Activated CD4-positive, alpha-beta T cell treated with anti-CD3 and anti-CD28 coated beads for 36 hours (primary cell): ENCODE measurements at regions of chr6 and their contacts with region 1.

Region 1: GRCh38 chr6:32127717-32128592 is at the start of gene ATF6B:
- DNase-seq: peak; percentile 99
- ATAC-seq: peak; percentile 91
- H3K4me3 Mint-ChIP-seq: peak within 1 kb of the TSS; percentile 99
- H3K27ac Mint-ChIP-seq: peak within 1 kb of the TSS; percentile 98
- H3K4me1 Mint-ChIP-seq: peaks cover 39% of the 10 kb centered on the region
- H3K27me3 Mint-ChIP-seq: no peaks in the 10 kb centered on the region
- total RNA-seq, gene ATF6B: 60.2 to 63.4 TPM

Region 2: GRCh38 chr6:31216208-31216898 is 911.6 kb before region 1 on chr6:
- CTCF ChIA-PET with region 1: no interaction called
- POLR2A ChIA-PET with region 1: no interaction called
- intact Hi-C with region 1: no loop called
- DNase-seq: no peak
- ATAC-seq: no peak
- H3K4me3 Mint-ChIP-seq: no peak overlapping the region
- H3K27ac Mint-ChIP-seq: no peak overlapping the region
- H3K4me1 Mint-ChIP-seq: peaks cover 3% of the 10 kb centered on the region
- H3K27me3 Mint-ChIP-seq: no peaks in the 10 kb centered on the region

Region 3: GRCh38 chr6:31958741-31959739 is 168.9 kb before region 1 on chr6 and contains the starts of genes NELFE and SKIC2:
- CTCF ChIA-PET with region 1: no interaction called
- POLR2A ChIA-PET with region 1: no interaction called
- intact Hi-C with region 1: loop called in 1 of 2 experiments (anchors 1 kb)
- DNase-seq: peak; percentile 99
- ATAC-seq: peak; percentile 99
- H3K4me3 Mint-ChIP-seq: peak within 1 kb of the TSS; percentile 95
- H3K27ac Mint-ChIP-seq: peak within 1 kb of the TSS; percentile 98
- H3K4me1 Mint-ChIP-seq: peaks cover 34% of the 10 kb centered on the region
- H3K27me3 Mint-ChIP-seq: no peaks in the 10 kb centered on the region
- total RNA-seq, gene NELFE: 74.3 to 95.1 TPM
- total RNA-seq, gene SKIC2: 90.2 to 104 TPM

Region 4: GRCh38 chr6:32076321-32076809 is 51.6 kb before region 1 on chr6:
- CTCF ChIA-PET with region 1: no interaction called
- POLR2A ChIA-PET with region 1: no interaction called
- intact Hi-C with region 1: no loop called
- DNase-seq: no peak
- ATAC-seq: no peak
- H3K4me3 Mint-ChIP-seq: no peak overlapping the region
- H3K27ac Mint-ChIP-seq: no peak overlapping the region
- H3K4me1 Mint-ChIP-seq: no peaks in the 10 kb centered on the region
- H3K27me3 Mint-ChIP-seq: no peaks in the 10 kb centered on the region

Region 5: DNA sequence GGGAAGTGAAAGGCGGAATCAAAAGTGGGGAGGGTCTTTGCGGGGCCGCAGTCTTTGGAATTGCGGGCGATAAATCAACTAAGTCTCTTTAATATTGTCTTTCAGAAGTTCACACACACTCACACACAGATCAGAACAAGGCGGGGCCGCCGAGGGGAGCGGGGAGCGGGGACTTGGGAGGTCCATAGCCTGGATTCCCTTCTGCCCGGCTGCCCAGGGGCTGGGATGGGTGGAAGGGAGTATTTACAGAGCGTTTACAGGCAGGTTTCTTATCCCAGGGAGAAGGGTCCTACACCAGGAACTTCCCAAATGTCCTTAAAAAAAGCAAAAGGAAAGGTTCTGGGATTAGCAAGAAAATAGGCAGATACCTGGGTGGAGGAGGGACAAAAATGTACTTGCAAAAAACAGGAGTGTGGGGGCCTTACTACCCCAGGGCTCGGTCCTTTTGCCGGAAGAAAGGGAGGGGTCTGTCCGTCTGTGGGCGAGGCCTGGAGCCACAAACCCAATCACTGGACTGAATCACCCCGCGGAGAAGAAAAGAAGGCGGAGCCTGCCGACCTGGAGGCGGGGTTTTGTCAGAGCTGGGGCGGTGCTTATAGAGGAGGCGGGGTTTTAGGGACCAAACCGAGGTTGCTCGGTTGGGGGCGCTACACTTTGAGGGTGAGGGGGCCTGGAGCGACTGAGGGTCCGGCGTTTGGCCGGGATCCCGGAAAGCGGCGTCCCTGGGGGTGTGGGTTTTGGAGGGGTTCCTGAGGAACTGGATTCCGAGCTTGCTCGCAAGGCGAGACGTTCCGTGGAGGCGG is 20.5 kb after region 1 on chr6:
- CTCF ChIA-PET with region 1: interaction called, 6 read pairs
- POLR2A ChIA-PET with region 1: interaction called, 3 read pairs
- intact Hi-C with region 1: loop called in 1 of 2 experiments (anchors 1 kb)
- DNase-seq: peak; percentile 88
- ATAC-seq: peak; percentile 88
- H3K4me3 Mint-ChIP-seq: peak overlapping the region; percentile 67
- H3K27ac Mint-ChIP-seq: peak overlapping the region; percentile 0
- H3K4me1 Mint-ChIP-seq: peaks cover 42% of the 10 kb centered on the region
- H3K27me3 Mint-ChIP-seq: peaks cover 19% of the 10 kb centered on the region

Region 6: GRCh38 chr6:32190054-32190851 is 62.3 kb after region 1 on chr6 and contains the start of gene PBX2:
- CTCF ChIA-PET with region 1: interaction called, 7 read pairs
- POLR2A ChIA-PET with region 1: interaction called, 4 read pairs
- intact Hi-C with region 1: loop called (anchors 1 kb)
- DNase-seq: peak; percentile 92
- ATAC-seq: peak; percentile 58
- H3K4me3 Mint-ChIP-seq: peak within 1 kb of the TSS; percentile 95
- H3K27ac Mint-ChIP-seq: peak within 1 kb of the TSS; percentile 96
- H3K4me1 Mint-ChIP-seq: peaks cover 66% of the 10 kb centered on the region
- H3K27me3 Mint-ChIP-seq: no peaks in the 10 kb centered on the region
- total RNA-seq, gene PBX2: 64.9 to 77.9 TPM

Region 7: GRCh38 chr6:32843979-32844838 is 716.3 kb after region 1 on chr6 and contains the start of gene PSMB8:
- CTCF ChIA-PET with region 1: no interaction called
- POLR2A ChIA-PET with region 1: no interaction called
- intact Hi-C with region 1: loop called in 1 of 2 experiments (anchors 2 kb)
- DNase-seq: peak; percentile 99
- ATAC-seq: peak; percentile 73
- H3K4me3 Mint-ChIP-seq: peak within 1 kb of the TSS; percentile 95
- H3K27ac Mint-ChIP-seq: peak within 1 kb of the TSS; percentile 97
- H3K4me1 Mint-ChIP-seq: peaks cover 66% of the 10 kb centered on the region
- H3K27me3 Mint-ChIP-seq: no peaks in the 10 kb centered on the region
- total RNA-seq, gene PSMB8: 238 to 338 TPM

Region 8: DNA sequence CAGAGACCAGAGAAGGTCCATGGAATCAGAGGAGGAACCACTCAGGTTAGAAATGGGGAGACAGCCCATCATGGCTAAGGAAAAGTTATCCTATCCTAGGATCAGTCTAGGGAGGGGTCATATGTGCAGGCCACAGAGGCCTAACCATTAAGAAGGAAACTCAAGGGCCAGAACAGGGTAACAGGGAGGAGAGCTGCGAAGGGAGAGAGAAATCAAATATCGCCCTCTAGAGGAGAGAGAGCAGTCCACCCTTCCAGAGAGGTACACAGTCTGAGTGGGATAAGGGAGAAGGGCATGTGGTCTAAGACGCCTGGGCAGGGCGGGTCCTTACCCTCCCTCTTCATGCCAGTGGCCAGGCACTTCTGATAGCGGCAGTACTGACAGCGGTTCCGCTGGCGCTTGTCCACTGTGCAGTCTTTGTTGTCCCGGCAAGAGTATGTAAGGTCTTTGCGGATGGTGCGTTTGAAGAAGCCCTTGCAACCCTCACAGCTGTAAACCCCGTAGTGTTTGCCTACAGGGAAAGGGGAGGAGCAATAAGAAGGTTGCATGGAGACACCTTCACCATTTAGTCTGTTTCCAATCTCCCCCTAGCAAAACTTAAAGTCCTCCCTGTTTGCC is 1069.6 kb after region 1 on chr6:
- CTCF ChIA-PET with region 1: no interaction called
- POLR2A ChIA-PET with region 1: no interaction called
- intact Hi-C with region 1: no loop called
- DNase-seq: peak; percentile 33
- ATAC-seq: peak; percentile 53
- H3K4me3 Mint-ChIP-seq: peak overlapping the region; percentile 6
- H3K27ac Mint-ChIP-seq: peak overlapping the region; percentile 55
- H3K4me1 Mint-ChIP-seq: peaks cover 53% of the 10 kb centered on the region
- H3K27me3 Mint-ChIP-seq: no peaks in the 10 kb centered on the region